PC-3 (cell line): ENCODE measurements at regions of chr9 and their contacts with region 1.

Region 1: GRCh38 chr9:125296833-125297372 is 35.3 kb downstream of the GAPVD1 start:
- DNase-seq: peak; percentile 86
- ATAC-seq: peak; percentile 93
- H3K4me3 ChIP-seq: no peak overlapping the region
- H3K27ac ChIP-seq: peak overlapping the region; percentile 26
- H3K4me1 ChIP-seq: peaks cover 11% of the 10 kb centered on the region
- H3K27me3 ChIP-seq: no peaks in the 10 kb centered on the region
- CTCF ChIP-seq: no peak

Region 2: GRCh38 chr9:125137200-125137599 is 159.7 kb before region 1 on chr9:
- CTCF ChIA-PET with region 1: no interaction called
- POLR2A ChIA-PET with region 1: interaction called, 11 read pairs
- intact Hi-C with region 1: no loop called
- DNase-seq: peak; percentile 63
- ATAC-seq: peak; percentile 95
- H3K4me3 ChIP-seq: no peak overlapping the region
- H3K27ac ChIP-seq: no peak overlapping the region
- H3K4me1 ChIP-seq: no peaks in the 10 kb centered on the region; the same call in 1 of the 2 replicates
- H3K27me3 ChIP-seq: no peaks in the 10 kb centered on the region
- CTCF ChIP-seq: no peak

Region 3: GRCh38 chr9:125214186-125214585 is 82.7 kb before region 1 on chr9:
- CTCF ChIA-PET with region 1: no interaction called
- POLR2A ChIA-PET with region 1: no interaction called
- intact Hi-C with region 1: no loop called
- DNase-seq: no peak
- ATAC-seq: no peak
- H3K4me3 ChIP-seq: no peak overlapping the region
- H3K27ac ChIP-seq: no peak overlapping the region
- H3K4me1 ChIP-seq: no peaks in the 10 kb centered on the region
- H3K27me3 ChIP-seq: no peaks in the 10 kb centered on the region
- CTCF ChIP-seq: no peak

Region 4: DNA sequence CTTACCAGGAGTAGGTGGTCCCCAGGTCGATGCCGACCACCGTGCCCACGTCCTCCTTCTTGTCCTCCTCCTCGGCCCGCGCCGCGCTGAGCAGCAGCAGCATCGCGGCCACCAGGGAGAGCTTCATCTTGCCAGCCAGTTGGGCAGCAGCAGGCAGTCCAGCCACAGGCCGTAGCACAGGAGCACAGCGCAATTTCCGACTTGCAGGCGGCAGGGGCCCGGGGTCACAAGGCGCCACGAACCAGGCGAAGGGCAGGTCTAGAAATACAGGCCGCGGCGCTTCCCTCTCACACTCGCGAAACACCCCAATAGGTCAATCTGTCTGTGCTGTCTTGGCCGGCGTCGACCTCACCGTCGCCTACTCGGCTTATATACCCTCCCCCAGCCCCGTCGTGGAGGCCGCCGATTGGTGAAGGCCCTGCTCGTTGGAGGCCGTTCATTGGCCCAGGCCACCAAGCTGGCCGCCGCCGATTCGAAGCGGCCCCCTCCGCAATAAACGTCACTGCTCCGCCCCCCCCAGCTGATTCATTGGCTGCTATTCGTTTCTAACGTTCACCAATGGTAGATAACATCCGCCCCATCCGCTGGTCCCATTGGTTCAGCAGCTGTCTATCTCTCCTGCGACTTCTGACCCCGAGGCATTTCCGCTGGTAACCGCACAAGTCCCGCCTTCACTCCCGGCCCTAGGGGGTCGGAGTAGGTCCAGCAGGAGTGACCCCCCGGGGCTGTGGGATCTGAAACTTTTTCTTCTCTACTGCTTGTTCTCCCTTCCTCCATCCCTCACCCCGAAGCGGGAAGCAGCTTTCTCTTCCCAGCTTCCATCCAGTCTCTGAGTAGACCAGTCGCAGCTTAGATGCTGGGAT is 55.7 kb before region 1 on chr9 and contains the start of gene HSPA5:
- CTCF ChIA-PET with region 1: no interaction called
- POLR2A ChIA-PET with region 1: interaction called, 7 read pairs
- intact Hi-C with region 1: loop called (anchors 1 kb)
- DNase-seq: peak; percentile 97
- ATAC-seq: peak; percentile 80
- H3K4me3 ChIP-seq: peak within 1 kb of the TSS; percentile 93
- H3K27ac ChIP-seq: peak within 1 kb of the TSS; percentile 72
- H3K4me1 ChIP-seq: peaks cover 43% of the 10 kb centered on the region
- H3K27me3 ChIP-seq: no peaks in the 10 kb centered on the region
- CTCF ChIP-seq: no peak
- total RNA-seq, gene HSPA5: 112 and 142 TPM in 2 replicates

Region 5: GRCh38 chr9:125261501-125262293 is 35.2 kb before region 1 on chr9 and contains the start of gene GAPVD1:
- CTCF ChIA-PET with region 1: interaction called, 3 read pairs
- POLR2A ChIA-PET with region 1: interaction called, 4 read pairs
- intact Hi-C with region 1: loop called (anchors 5 kb)
- DNase-seq: peak; percentile 89
- ATAC-seq: peak; percentile 97
- H3K4me3 ChIP-seq: peak within 1 kb of the TSS; percentile 93
- H3K27ac ChIP-seq: no peak within 1 kb of the TSS
- H3K4me1 ChIP-seq: peaks cover 15% of the 10 kb centered on the region
- H3K27me3 ChIP-seq: no peaks in the 10 kb centered on the region
- CTCF ChIP-seq: peak; percentile 29; the same call in 1 of the 2 replicates
- total RNA-seq, gene GAPVD1: 29.7 and 30.5 TPM in 2 replicates

Region 6: DNA sequence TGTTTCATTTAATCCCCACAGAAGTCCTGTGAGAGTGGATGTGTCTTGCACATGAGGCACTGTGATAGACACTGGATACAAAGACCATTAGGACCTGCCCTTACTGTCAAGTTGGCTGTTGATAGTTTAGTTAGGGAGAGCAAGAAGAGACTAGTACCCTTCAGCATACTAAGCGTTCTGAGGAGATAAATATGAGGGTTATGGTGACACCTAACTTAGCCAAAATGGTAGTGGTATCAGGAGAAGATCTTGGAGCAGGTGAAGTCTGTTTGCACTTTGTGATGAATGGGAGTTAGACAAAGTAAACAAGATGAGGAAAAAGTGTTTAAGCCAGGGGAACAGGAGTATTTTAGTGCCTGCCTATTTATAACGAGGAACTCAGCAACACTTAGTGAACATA is 11.8 kb after region 1 on chr9:
- CTCF ChIA-PET with region 1: no interaction called
- POLR2A ChIA-PET with region 1: interaction called, 25 read pairs
- intact Hi-C with region 1: no loop called
- DNase-seq: no peak
- ATAC-seq: no peak
- H3K4me3 ChIP-seq: no peak overlapping the region
- H3K27ac ChIP-seq: no peak overlapping the region
- H3K4me1 ChIP-seq: no peaks in the 10 kb centered on the region
- H3K27me3 ChIP-seq: no peaks in the 10 kb centered on the region
- CTCF ChIP-seq: no peak

Region 7: DNA sequence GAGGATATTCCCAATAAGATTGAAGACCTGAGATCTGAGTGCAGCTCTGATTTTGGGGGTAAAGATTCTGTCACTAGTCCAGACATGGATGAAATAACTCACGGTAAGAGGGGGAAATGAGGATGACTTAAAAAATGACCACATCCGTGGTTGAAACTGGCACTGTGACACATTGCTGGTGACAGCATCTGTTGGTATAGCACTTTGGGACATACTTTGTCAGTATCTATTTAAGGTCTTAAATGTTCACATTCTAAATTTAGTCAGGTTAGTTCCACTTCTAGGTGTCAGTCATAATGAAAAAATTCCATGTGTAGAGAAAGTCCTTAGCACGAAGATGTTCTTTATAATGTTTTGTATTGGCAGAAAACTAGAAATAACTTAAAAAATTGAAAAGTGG is 35.6 kb after region 1 on chr9:
- CTCF ChIA-PET with region 1: interaction called, 3 read pairs
- POLR2A ChIA-PET with region 1: interaction called, 12 read pairs
- intact Hi-C with region 1: loop called (anchors 1 kb)
- DNase-seq: peak; percentile 4
- ATAC-seq: no peak
- H3K4me3 ChIP-seq: no peak overlapping the region
- H3K27ac ChIP-seq: no peak overlapping the region
- H3K4me1 ChIP-seq: peaks cover 24% of the 10 kb centered on the region
- H3K27me3 ChIP-seq: no peaks in the 10 kb centered on the region
- CTCF ChIP-seq: no peak

Region 8: DNA sequence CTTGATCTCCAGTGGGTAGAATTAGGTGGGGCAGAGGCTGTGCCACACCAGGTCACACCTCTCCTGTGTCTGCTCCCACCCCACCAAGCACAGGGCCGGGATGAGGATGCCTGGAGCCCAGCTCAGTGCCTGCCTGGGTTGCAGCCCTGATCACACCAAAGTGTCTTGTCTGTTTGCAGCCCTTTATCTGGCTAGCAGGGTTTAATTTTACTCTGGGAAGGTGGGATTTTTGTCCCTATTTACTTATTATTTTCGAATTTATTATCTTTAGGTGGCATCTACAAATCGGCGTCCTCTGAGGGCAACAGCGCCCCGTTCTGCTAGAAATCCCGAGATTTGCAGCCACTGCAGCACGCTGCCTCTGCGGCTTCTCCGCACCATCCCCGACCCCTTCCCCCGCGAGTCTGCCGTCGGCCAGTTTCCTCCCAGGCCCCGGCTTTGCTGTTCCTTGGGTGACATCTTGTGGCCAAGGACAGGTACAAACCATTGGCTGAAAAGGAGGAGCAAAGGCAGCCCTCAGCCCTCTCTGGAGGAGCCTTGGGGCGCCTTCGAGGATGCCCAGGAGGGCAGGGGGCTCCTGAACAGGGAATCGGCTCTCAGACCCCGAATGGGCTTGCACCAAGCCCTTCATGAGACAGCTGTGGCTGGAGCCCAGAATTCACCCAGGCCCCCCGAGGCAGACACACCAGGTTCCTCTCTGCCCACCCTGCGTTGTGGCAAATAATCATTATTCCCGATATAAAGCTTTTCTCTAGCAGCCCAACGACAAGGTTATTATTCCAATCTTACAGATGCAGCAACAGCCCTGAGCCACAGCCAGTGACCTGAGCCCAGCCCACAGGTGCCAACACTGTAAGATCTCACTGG is 77.8 kb after region 1 on chr9:
- CTCF ChIA-PET with region 1: no interaction called
- POLR2A ChIA-PET with region 1: no interaction called
- intact Hi-C with region 1: loop called (anchors 10 kb)
- DNase-seq: peak; percentile 66
- ATAC-seq: peak; percentile 80
- H3K4me3 ChIP-seq: peak overlapping the region; percentile 59
- H3K27ac ChIP-seq: no peak overlapping the region
- H3K4me1 ChIP-seq: no peaks in the 10 kb centered on the region
- H3K27me3 ChIP-seq: no peaks in the 10 kb centered on the region
- CTCF ChIP-seq: peak; percentile 77